ENCODE measurements at regions of chr4 and their contacts with region 1.

Region 1: DNA sequence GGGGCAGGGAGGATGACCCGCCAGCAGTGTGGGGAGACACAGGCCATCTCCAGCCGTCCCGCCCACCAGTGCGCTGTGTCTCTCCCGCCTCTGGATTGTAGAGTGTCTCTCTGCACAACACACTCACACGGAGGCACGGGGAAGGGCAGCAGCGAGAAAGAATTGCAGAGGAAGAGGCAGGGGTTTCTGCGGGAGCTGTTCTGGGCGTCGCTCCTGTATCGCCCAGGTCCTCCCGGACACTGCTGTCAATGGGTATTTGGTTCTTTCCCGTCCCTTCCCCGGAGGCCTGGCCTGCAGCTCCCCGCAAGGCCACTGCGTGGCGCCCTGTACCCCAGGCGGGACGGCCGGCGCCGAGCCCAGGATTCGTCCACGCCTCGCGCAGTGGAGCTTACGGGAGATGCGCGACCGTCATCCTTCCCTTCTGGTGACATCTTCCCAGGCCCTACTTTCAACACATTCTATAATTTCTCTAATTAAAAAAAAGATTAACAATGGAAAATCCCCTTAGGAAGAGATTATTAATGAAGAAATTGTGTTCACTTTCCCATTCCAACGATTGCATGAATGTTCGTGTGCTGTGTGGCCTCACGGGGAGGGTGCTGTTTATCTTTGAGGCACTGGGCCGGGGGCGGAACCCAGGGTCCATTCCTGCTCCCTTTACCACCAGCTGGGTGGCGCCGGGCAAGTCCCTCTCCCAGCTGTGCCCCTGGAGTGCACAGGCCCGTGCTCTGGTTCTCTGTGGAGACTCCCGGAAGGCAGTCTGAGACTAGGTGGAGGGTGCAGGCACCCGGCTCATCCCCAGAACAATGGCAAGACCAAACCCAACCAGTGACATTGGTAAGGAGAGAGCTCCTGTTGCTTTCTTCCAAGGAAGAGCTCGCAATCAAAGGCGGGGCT is 95.7 kb downstream of the CPZ start:
- DNase-seq: peak; percentile 51 to 79 (median 74)
- ATAC-seq: peak; percentile 97
- H3K4me3 ChIP-seq: no peak overlapping the region
- H3K27ac ChIP-seq: no peak overlapping the region
- H3K4me1 ChIP-seq: peaks cover 0 to 4% of the 10 kb centered on the region in 2 experiments; a peak in 2 of 5 replicates
- H3K27me3 ChIP-seq: peaks cover 2 to 33% of the 10 kb centered on the region in 2 experiments; a peak in 3 of 5 replicates
- CTCF ChIP-seq: peak; percentile 78 to 80 (median 79)
- EP300 ChIP-seq: no peak
- POLR2A ChIP-seq: no peak
- RAD21 ChIP-seq: peak in 1 of 2 experiments; percentile 72; a peak in 3 of 4 replicates

Region 2: DNA sequence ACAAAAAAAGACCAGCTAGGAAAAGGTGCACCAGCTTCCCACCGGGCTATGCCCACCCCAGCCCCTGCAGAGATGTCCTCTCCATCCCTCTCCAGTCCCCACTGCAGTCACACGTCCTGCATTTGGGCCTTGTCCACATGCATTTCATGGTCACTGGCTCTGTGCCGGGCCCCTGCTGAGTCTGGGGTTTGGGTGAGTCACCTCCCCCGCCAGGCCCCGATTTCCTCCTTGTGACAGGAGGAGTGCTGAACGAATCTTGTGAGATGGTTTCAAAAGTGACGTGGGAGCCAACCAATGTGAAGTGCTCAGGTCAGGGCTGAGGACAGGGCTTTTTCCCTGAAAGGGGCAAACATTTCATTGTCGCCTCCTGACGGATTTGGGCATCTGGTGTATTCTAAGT is 88.6 kb before region 1 on chr4:
- CTCF ChIA-PET with region 1: no interaction called
- POLR2A ChIA-PET with region 1: no interaction called
- in situ Hi-C with region 1: no loop called
- intact Hi-C with region 1: no loop called
- DNase-seq: peak; percentile 25 to 60 (median 39)
- ATAC-seq: peak; percentile 71
- H3K4me3 ChIP-seq: no peak overlapping the region
- H3K27ac ChIP-seq: no peak overlapping the region
- H3K4me1 ChIP-seq: peaks cover 0 to 31% of the 10 kb centered on the region in 2 experiments; a peak in 2 of 5 replicates
- H3K27me3 ChIP-seq: no peaks in the 10 kb centered on the region; a peak in 1 of 5 replicates
- CTCF ChIP-seq: no peak
- EP300 ChIP-seq: no peak
- POLR2A ChIP-seq: no peak
- RAD21 ChIP-seq: no peak

Region 3: GRCh38 chr4:8886612-8887406 is 198.5 kb after region 1 on chr4:
- CTCF ChIA-PET with region 1: no interaction called
- POLR2A ChIA-PET with region 1: no interaction called
- in situ Hi-C with region 1: no loop called
- intact Hi-C with region 1: loop called (anchors 5 kb)
- DNase-seq: peak in 3 of 4 experiments; percentile 3 to 60 (median 51)
- ATAC-seq: no peak
- H3K4me3 ChIP-seq: no peak overlapping the region
- H3K27ac ChIP-seq: no peak overlapping the region
- H3K4me1 ChIP-seq: no peaks in the 10 kb centered on the region
- H3K27me3 ChIP-seq: peaks cover 0 to 15% of the 10 kb centered on the region in 2 experiments; a peak in 3 of 5 replicates
- CTCF ChIP-seq: peak; percentile 33 to 66 (median 38); a peak in 5 of 6 replicates
- EP300 ChIP-seq: no peak
- POLR2A ChIP-seq: no peak
- RAD21 ChIP-seq: no peak

Region 4: GRCh38 chr4:8917868-8918783 is 229.8 kb after region 1 on chr4:
- CTCF ChIA-PET with region 1: interaction called, 3 read pairs
- POLR2A ChIA-PET with region 1: no interaction called
- in situ Hi-C with region 1: loop called (anchors 10 kb)
- intact Hi-C with region 1: loop called (anchors 1 kb)
- DNase-seq: peak; percentile 48 to 80 (median 74)
- ATAC-seq: peak; percentile 87
- H3K4me3 ChIP-seq: no peak overlapping the region
- H3K27ac ChIP-seq: no peak overlapping the region
- H3K4me1 ChIP-seq: peaks cover 0 to 3% of the 10 kb centered on the region in 2 experiments; a peak in 1 of 5 replicates
- H3K27me3 ChIP-seq: peaks cover 0 to 13% of the 10 kb centered on the region in 2 experiments; a peak in 1 of 5 replicates
- CTCF ChIP-seq: peak; percentile 72 to 77 (median 75)
- EP300 ChIP-seq: no peak
- POLR2A ChIP-seq: no peak
- RAD21 ChIP-seq: peak in 1 of 2 experiments; percentile 77; a peak in 3 of 4 replicates